ENCODE measurements at regions of chr15 and their contacts with region 1.

Region 1: DNA sequence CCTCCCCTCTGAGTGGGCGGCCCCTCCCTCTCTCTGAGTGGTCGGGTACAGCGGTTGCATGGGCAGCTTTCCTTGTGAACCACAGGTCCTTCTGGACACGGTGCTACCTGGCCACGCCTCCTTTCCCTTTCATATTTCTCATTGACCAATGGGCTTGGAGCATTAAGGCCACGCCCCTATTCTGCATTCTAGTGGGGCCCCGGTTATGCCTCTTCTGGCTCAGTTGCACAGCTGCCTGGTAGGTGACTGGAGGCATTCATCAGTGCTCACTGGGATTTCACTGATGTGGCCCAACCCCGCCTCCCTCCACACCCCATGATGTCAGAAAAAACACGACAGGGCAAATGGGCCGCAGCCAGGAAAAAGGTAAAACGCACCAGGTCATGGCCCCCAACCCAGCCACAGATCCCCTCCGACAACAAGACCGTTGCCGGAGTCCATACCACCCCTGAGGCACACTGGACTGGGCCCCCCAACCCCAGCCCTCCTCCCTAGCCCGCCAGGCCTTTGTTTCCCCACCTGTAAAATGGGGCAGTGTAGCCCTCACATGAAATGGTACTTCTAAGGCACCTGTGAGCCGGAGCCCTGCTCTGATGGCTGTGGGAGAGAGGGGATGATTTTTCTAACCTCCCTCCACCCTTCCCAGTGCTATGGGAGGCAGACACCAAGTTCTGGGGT is 26.3 kb downstream of the NGRN start:
- H3K4me3 ChIP-seq: no peak overlapping the region
- H3K27ac ChIP-seq: no peak overlapping the region
- H3K4me1 ChIP-seq: no peaks in the 10 kb centered on the region
- CTCF ChIP-seq: no peak

Region 2: DNA sequence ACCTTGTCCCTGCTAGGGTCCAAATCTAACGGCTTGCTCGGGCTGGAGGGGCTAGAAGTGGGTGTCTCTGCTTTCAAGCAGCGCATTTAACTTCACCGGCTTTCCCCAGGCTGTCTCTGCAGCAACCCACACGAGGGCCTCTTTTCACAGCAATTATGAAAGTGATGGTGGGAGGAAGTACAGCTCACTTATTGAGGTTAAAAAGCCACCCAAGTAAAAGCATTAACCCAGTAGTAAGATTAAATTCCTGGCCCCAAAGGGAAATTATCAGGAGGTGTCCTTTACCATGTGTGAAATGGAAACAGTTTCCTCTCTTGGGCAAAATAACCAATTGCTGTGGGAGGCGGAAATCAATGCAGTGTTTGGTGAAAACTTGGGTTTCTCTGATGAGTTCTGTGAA is 14.7 kb after region 1 on chr15:
- CTCF ChIA-PET with region 1: interaction called, 23 read pairs
- POLR2A ChIA-PET with region 1: no interaction called
- H3K4me3 ChIP-seq: no peak overlapping the region
- H3K27ac ChIP-seq: no peak overlapping the region
- H3K4me1 ChIP-seq: no peaks in the 10 kb centered on the region
- CTCF ChIP-seq: no peak

Region 3: GRCh38 chr15:90497912-90498311 is 206.1 kb after region 1 on chr15:
- CTCF ChIA-PET with region 1: no interaction called
- POLR2A ChIA-PET with region 1: no interaction called
- H3K4me3 ChIP-seq: no peak overlapping the region
- H3K27ac ChIP-seq: no peak overlapping the region
- H3K4me1 ChIP-seq: no peaks in the 10 kb centered on the region
- CTCF ChIP-seq: no peak